Calu3 (cell line): ENCODE measurements at regions of chr20 and their contacts with region 1.

Region 1: DNA sequence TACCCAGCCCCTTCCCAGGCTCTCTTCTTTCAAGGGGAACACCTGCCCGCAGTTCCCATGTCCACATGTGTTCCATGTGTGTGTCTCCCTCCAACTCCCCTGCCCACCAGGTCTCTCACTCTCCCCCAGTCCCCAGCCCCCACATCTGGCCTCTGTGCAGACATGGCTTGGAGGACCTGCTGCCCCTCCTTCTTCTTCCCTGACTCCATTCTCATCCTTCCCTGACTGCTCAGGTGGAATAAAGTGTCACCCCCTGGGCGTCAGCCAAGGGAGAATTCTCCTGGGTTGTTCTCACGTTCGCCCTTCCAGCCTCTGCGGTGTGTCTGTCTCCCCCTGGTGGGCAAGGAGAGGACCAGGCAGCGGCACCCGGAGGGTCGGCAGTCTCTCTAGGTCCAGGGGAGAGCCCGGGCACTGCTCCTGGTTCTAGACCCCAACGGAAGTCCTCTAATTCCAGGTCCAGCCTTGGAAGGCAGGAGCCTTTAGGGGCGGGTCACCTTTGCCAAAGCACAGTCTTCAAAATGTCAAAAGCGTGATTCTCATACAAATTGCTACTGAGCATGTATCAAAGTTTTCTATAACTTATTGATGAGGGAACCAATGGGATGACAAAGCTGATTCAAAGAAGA is 50.5 kb downstream of the EBF4 start:
- DNase-seq: peak; percentile 69
- H3K4me3 Mint-ChIP-seq: no peak overlapping the region
- H3K27ac Mint-ChIP-seq: no peak overlapping the region
- H3K4me1 Mint-ChIP-seq: peaks cover 8% of the 10 kb centered on the region
- H3K27me3 Mint-ChIP-seq: peaks cover 87% of the 10 kb centered on the region
- CTCF ChIP-seq: peak; percentile 73

Region 2: DNA sequence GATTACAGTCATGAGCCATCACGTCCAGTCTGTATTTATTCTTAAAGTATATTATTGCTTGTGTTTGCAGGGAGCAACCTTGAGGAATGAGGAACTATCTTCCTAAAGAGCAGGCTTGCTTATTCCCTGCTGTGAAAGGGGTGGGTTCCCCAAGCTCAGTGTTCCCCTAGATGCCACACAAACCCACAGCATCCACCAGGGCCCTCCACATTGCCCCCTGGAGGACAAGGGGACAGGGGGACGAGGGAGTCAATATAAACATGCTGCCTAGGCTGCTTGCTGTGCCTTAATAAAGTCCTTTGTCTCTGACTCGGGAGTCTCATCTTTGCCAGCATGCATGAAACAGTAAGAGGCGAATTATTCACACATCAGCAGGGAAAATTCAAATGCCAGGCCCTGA is 71.1 kb before region 1 on chr20:
- CTCF ChIA-PET with region 1: no interaction called
- intact Hi-C with region 1: no loop called
- DNase-seq: no peak
- H3K4me3 Mint-ChIP-seq: no peak overlapping the region
- H3K27ac Mint-ChIP-seq: no peak overlapping the region
- H3K4me1 Mint-ChIP-seq: no peaks in the 10 kb centered on the region
- H3K27me3 Mint-ChIP-seq: peaks cover 34% of the 10 kb centered on the region
- CTCF ChIP-seq: no peak

Region 3: DNA sequence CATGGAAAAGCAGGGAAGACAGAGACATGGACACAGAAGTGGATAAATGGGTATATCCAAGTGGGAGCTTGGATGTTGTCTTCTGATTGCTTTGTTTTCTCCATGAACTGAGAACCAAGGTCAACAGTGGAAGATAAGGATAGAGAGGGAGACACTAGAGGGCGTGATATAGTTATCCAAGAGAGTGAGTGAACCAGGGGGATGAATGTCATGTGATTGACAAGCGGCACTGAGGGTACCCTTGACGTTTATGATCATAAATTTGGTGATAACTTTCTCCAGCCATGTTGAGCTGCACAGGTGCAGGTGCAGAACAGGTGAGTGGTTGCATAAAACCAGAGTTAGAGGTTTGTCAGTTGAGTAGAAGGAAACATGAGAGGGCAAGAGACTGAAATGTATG is 29.8 kb before region 1 on chr20:
- CTCF ChIA-PET with region 1: no interaction called
- intact Hi-C with region 1: loop called (anchors 1 kb)
- DNase-seq: no peak
- H3K4me3 Mint-ChIP-seq: no peak overlapping the region
- H3K27ac Mint-ChIP-seq: no peak overlapping the region
- H3K4me1 Mint-ChIP-seq: no peaks in the 10 kb centered on the region
- H3K27me3 Mint-ChIP-seq: no peaks in the 10 kb centered on the region
- CTCF ChIP-seq: no peak